Prostate gland (tissue), 2 donors: ENCODE measurements at regions of chr22 and their contacts with region 1.

Region 1: GRCh38 chr22:45263463-45264269 is 21.1 kb upstream of the UPK3A start:
- DNase-seq: peak; percentile 77
- H3K4me3 ChIP-seq: no peak overlapping the region
- H3K27ac ChIP-seq: peak overlapping the region in 1 of 2 donors; percentile 36
- H3K4me1 ChIP-seq: peaks cover 3% of the 10 kb centered on the region
- H3K27me3 ChIP-seq: no peaks in the 10 kb centered on the region
- CTCF ChIP-seq: peak; percentile 57 to 92 (median 82)
- POLR2A ChIP-seq: no peak

Region 2: DNA sequence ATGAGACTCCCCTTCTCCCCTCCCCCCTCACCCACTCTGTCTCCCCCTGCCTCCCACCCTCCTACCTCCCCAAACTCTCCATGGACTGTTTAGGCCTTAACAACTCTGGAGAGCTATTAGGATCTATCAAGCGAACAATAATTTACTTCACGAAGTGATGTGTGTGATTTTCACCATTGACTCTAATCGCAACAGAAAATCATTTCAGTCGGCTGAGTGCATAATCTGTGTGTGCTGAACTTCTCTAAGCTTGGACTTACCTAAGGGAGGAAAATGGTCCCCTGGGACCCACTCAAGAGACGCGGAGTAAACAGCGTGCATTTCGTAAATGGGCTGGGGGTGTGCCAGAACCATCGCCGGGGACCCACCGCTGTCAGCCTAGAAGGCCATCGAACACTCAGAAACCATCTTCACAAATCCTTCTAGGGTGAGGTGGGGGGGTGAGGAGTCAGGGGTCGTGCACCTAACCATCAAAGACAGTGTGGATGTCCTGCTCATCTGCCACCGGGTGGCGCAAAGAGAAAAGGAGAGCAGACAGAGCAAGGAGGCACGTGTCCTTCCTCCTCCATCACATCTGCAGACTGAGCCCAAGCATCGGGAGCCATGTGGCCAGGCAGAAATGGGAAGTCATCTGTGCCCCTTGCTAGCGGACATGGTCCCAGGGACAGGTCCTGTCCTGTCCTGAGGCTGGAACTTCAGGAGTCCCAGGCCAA is 162.0 kb before region 1 on chr22:
- intact Hi-C with region 1: loop called (anchors 5 kb)
- DNase-seq: peak; percentile 59
- H3K4me3 ChIP-seq: no peak overlapping the region
- H3K27ac ChIP-seq: no peak overlapping the region
- H3K4me1 ChIP-seq: no peaks in the 10 kb centered on the region
- H3K27me3 ChIP-seq: no peaks in the 10 kb centered on the region
- CTCF ChIP-seq: peak in 3 of 4 experiments; percentile 50 to 74 (median 66)
- POLR2A ChIP-seq: no peak